ENCODE measurements at regions of chr2 and their contacts with region 1.

Region 1: DNA sequence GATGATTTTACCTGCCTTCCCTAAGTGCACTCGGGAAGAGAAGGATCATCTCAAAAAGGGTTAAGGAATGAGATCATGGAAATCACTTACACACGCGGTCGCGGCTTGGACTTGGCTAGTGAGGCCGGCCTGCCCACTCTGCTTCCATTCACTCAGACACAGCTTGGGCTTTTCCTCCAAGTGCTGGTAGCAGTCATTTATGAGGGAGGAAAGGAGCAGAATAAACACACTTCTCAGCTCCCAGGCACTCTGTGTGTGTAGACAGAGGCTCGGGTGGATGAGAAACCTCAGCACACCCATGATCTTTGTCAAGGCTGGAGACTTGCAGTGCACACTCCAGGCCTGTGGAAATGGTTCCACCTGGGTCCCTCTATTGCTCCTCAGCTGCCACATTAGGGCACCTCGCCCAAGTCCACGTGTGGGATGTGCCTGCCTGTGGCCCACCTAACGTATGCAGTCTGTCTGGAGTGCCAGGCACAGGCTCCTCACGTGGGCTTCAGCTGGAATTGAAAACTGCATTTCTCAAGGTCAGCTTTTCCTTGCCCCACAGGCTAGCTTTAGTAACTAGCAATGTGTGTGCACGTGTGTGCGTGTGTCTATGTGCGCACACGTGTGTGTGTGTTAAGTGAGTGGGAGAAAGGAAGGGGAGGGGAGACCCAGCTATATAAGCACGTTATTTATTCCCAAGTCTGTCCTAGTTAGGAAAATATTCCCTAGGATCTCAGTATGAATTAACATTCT is 288.4 kb downstream of the SOX11 start:
- DNase-seq: no peak
- H3K4me3 ChIP-seq: peak overlapping the region in 7 of 59 donors; percentile 28 to 69 (median 65)
- H3K27ac ChIP-seq: peak overlapping the region in 55 of 59 donors; percentile 1 to 92 (median 79)
- H3K27me3 ChIP-seq: peaks cover 0 to 17% (median 0%) of the 10 kb centered on the region in 45 donors
- CTCF ChIP-seq: no peak

Region 2: GRCh38 chr2:6073241-6074088 is 92.8 kb after region 1 on chr2:
- intact Hi-C with region 1: loop called in 1 of 2 experiments (anchors 5 kb)
- DNase-seq: peak in 2 of 10 donors; percentile 28 to 35
- H3K4me3 ChIP-seq: peak overlapping the region in 47 of 59 donors; percentile 0 to 57 (median 30)
- H3K27ac ChIP-seq: peak overlapping the region in 31 of 59 donors; percentile 1 to 71 (median 44)
- H3K27me3 ChIP-seq: peaks cover 0 to 6% (median 0%) of the 10 kb centered on the region in 45 donors
- CTCF ChIP-seq: peak in 10 of 56 donors; percentile 9 to 42 (median 16)